PC-9 (cell line): ENCODE measurements at regions of chr7 and their contacts with region 1.

Region 1: DNA sequence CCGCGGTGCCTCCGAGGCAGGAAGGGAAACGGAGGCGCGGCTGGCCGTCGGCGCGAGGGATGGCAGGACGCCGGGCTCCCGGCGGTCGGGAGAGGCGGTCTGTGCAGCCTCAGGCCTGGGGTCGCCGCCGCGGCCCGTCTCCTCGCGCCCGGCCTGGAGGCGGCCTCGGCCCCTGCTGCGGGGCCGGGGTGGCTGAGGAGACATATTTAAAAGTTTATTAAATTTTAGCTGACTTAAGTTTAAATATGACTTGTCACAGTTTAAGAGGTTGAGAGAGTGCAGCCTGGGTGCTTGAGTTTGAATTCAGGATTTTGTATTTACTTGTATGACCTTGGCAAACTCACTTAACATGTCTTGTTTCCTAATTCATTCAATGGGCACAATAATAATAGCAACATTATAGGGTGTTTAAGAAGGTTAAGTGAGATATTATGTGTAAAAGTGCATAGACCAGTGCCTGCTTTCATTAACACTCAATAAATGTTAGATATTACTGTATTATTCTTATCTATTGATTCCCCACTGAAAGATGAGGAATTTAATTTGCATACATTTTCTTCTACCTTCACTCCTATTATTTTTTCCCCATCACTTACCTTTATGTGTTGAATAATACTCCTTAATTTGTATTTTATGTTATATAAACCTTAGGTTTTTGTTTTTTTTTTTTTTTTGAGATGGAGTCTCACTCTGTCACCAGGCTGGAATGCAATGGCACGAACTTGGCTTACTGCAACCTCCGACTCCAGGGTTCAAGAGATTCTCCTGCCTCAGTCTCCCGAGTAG is 718 bp downstream of the DYNC2I1 start:
- DNase-seq: no peak
- H3K4me3 ChIP-seq: peak overlapping the region; percentile 95
- H3K27ac ChIP-seq: no peak overlapping the region
- H3K4me1 ChIP-seq: peaks cover 40% of the 10 kb centered on the region
- H3K27me3 ChIP-seq: no peaks in the 10 kb centered on the region
- CTCF ChIP-seq: no peak

Region 2: DNA sequence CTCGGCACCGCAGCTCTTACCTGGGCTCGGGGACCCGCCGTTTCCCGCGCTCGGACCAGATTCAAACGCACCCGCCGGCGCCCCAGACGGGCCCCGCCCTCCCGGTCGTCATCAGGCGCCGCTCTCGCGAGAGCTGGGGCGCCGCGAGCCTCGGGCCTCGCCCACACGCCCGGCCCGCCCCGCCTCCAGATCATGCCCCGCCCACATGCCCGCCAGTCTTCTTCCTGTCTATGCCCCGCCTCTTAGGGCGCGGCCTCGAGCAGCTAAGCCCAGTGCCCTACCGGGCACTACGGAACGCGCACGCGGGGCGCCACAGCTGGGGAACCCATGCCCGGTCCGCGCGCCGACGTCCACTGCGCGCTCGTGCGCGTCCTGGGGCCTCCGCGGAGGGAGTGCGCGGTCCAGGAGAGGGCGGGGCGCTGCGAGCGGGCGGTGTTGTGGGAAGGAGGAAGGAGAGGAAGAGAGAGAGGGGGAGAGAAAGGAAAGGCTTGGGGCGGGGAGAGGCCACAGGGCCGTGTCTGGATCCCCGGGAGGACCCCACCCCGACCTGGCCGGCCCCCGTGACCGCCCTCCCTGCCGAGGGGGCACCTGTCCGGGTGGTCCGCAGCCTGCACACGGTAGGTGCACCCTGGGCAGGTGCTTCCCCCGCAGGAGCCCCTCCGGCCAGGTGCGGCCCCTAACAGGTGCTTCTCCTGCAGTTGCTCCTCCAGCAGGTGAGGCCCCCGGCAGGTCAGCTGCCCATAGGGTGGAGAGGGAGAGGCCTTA is 152.2 kb before region 1 on chr7 and contains the start of gene NCAPG2:
- CTCF ChIA-PET with region 1: no interaction called
- POLR2A ChIA-PET with region 1: no interaction called
- intact Hi-C with region 1: loop called (anchors 2 kb)
- DNase-seq: peak; percentile 97 to 99
- H3K4me3 ChIP-seq: peak within 1 kb of the TSS; percentile 70
- H3K27ac ChIP-seq: peak within 1 kb of the TSS; percentile 50
- H3K4me1 ChIP-seq: peaks cover 33% of the 10 kb centered on the region
- H3K27me3 ChIP-seq: no peaks in the 10 kb centered on the region
- CTCF ChIP-seq: no peak; the same call in 1 of the 2 replicates
- total RNA-seq, gene NCAPG2: 99.5 and 124 TPM in 2 replicates

Region 3: DNA sequence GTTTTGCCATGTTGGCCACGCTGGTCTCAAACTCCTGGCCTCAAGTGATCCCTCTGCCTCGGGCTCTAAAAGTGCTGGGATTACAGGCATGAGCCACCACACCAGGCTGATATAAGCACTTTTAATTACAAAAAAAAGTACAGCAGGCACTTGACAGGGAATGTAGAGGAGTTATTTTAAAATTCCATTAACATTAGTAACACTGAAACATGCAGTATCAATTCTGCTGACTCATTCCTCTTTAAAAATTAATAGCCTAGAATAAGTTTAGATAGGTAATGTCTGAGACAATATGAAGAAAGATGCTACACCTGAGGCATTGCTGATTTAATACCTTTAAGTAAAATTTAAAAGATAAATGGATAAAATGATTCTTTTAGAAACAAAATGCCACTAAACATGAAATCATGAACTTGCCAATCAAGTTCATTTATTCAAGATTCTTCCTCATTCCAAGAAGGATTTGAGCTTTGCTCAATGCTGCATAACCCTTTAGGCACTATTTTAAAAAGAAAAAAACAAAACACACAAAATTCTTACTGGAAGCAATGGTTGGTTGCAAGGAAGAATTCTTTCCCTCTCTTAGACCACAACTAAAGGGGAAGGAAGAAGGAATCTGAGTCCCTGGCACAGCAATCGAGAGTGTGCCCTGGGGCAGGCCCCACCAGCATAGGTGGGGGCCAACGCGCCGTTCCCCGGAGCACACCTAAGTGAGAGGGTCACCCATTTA is 54.4 kb before region 1 on chr7:
- CTCF ChIA-PET with region 1: no interaction called
- POLR2A ChIA-PET with region 1: no interaction called
- intact Hi-C with region 1: loop called (anchors 1 kb)
- DNase-seq: peak; percentile 78 to 99
- H3K4me3 ChIP-seq: peak overlapping the region; percentile 35
- H3K27ac ChIP-seq: peak overlapping the region; percentile 97
- H3K4me1 ChIP-seq: peaks cover 59% of the 10 kb centered on the region
- H3K27me3 ChIP-seq: no peaks in the 10 kb centered on the region
- CTCF ChIP-seq: no peak

Region 4: DNA sequence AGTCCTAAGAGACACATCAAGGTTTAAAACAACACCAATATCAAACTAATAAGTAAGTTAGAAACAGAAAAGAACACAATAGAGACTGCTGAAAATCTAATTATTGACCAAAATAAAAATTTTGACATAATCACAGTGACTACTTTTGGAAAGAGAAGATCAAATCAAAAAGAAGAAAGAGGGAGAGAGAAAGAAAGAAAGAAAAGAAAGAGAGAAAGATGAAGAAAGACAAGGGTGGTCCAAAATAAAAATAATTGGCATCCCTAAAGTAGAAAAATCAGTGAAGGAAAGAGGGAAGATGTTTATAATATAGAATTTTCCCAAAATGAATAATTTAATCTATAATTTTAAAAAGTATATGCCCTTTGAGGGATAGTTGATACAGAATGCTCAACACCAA is 406.4 kb after region 1 on chr7:
- CTCF ChIA-PET with region 1: no interaction called
- POLR2A ChIA-PET with region 1: no interaction called
- intact Hi-C with region 1: no loop called
- DNase-seq: no peak
- H3K4me3 ChIP-seq: no peak overlapping the region
- H3K27ac ChIP-seq: no peak overlapping the region
- H3K4me1 ChIP-seq: no peaks in the 10 kb centered on the region
- H3K27me3 ChIP-seq: peaks cover 12% of the 10 kb centered on the region; the same call in 1 of the 2 replicates
- CTCF ChIP-seq: no peak